ENCODE measurements at regions of chr9 and their contacts with region 1.

Region 1: GRCh38 chr9:32378993-32379729 is 5.3 kb upstream of the ACO1 start:
- DNase-seq: peak; percentile 62
- ATAC-seq: peak; percentile 80
- H3K4me3 ChIP-seq: no peak overlapping the region
- H3K27ac ChIP-seq: no peak overlapping the region
- H3K4me1 ChIP-seq: peaks cover 10% of the 10 kb centered on the region
- H3K27me3 ChIP-seq: peaks cover 4% of the 10 kb centered on the region; the same call in 1 of the 2 replicates
- CTCF ChIP-seq: peak; percentile 74

Region 2: DNA sequence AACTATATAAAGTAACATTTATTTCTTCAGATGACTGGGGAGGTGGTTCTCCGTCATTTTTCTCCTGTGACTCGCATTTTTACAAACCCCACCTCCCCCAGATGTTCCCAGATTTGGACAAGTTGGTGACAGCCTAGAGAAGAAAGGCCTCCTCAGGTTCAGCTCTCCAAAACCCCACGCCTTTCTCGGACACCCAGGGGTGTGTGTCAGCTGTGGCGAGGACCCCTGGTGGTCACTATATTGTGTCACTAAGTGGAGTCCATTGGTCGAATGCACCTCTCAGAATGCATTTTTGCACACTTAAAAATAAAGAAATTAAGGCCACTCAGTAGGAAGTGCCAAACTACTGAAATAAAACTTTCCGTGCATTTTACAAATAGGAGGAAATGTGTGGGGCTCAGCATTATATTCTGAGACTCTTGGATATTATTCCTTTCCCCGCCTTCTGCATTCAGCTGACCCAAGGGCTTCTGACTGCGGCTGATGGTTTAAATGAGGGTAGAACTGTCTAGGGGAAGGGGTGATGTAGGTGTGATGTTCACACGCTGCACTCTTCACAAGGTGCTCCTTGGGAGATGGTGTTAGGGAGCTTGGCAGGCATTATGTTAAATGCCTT is 52.9 kb after region 1 on chr9:
- CTCF ChIA-PET with region 1: interaction called, 8 read pairs
- POLR2A ChIA-PET with region 1: no interaction called
- in situ Hi-C with region 1: no loop called
- intact Hi-C with region 1: loop called (anchors 2 kb)
- DNase-seq: no peak
- ATAC-seq: peak; percentile 83
- H3K4me3 ChIP-seq: no peak overlapping the region
- H3K27ac ChIP-seq: no peak overlapping the region
- H3K4me1 ChIP-seq: no peaks in the 10 kb centered on the region
- H3K27me3 ChIP-seq: no peaks in the 10 kb centered on the region
- CTCF ChIP-seq: peak; percentile 84

Region 3: GRCh38 chr9:32526041-32526706 is 147.0 kb after region 1 on chr9 and contains the start of gene RIGI:
- CTCF ChIA-PET with region 1: interaction called, 34 read pairs
- POLR2A ChIA-PET with region 1: no interaction called
- in situ Hi-C with region 1: no loop called
- intact Hi-C with region 1: no loop called
- DNase-seq: peak; percentile 85
- ATAC-seq: peak; percentile 94
- H3K4me3 ChIP-seq: peak within 1 kb of the TSS; percentile 64 to 88
- H3K27ac ChIP-seq: peak within 1 kb of the TSS; percentile 96
- H3K4me1 ChIP-seq: peaks cover 32% of the 10 kb centered on the region
- H3K27me3 ChIP-seq: no peaks in the 10 kb centered on the region
- CTCF ChIP-seq: peak; percentile 76
- total RNA-seq, gene RIGI: 27.7 TPM

Region 4: GRCh38 chr9:32579706-32580331 is 200.7 kb after region 1 on chr9:
- CTCF ChIA-PET with region 1: interaction called, 90 read pairs
- POLR2A ChIA-PET with region 1: no interaction called
- in situ Hi-C with region 1: no loop called
- intact Hi-C with region 1: loop called (anchors 1 kb)
- DNase-seq: no peak
- ATAC-seq: peak; percentile 59; the same call in 1 of the 2 replicates
- H3K4me3 ChIP-seq: no peak overlapping the region
- H3K27ac ChIP-seq: no peak overlapping the region
- H3K4me1 ChIP-seq: no peaks in the 10 kb centered on the region
- H3K27me3 ChIP-seq: peaks cover 2% of the 10 kb centered on the region; the same call in 1 of the 2 replicates
- CTCF ChIP-seq: peak; percentile 93

Region 5: GRCh38 chr9:32954642-32955041 is 575.5 kb after region 1 on chr9:
- CTCF ChIA-PET with region 1: no interaction called
- POLR2A ChIA-PET with region 1: no interaction called
- in situ Hi-C with region 1: no loop called
- intact Hi-C with region 1: loop called (anchors 5 kb)
- DNase-seq: no peak
- ATAC-seq: no peak
- H3K4me3 ChIP-seq: no peak overlapping the region
- H3K27ac ChIP-seq: no peak overlapping the region
- H3K4me1 ChIP-seq: no peaks in the 10 kb centered on the region
- H3K27me3 ChIP-seq: no peaks in the 10 kb centered on the region
- CTCF ChIP-seq: no peak